ENCODE measurements at regions of chr4 and their contacts with region 1.

Region 1: GRCh38 chr4:526189-526909 is 27.3 kb downstream of the PIGG start:
- DNase-seq: no peak
- H3K4me3 ChIP-seq: no peak overlapping the region
- H3K27ac ChIP-seq: no peak overlapping the region
- H3K4me1 ChIP-seq: no peaks in the 10 kb centered on the region
- H3K27me3 ChIP-seq: no peaks in the 10 kb centered on the region
- CTCF ChIP-seq: no peak

Region 2: DNA sequence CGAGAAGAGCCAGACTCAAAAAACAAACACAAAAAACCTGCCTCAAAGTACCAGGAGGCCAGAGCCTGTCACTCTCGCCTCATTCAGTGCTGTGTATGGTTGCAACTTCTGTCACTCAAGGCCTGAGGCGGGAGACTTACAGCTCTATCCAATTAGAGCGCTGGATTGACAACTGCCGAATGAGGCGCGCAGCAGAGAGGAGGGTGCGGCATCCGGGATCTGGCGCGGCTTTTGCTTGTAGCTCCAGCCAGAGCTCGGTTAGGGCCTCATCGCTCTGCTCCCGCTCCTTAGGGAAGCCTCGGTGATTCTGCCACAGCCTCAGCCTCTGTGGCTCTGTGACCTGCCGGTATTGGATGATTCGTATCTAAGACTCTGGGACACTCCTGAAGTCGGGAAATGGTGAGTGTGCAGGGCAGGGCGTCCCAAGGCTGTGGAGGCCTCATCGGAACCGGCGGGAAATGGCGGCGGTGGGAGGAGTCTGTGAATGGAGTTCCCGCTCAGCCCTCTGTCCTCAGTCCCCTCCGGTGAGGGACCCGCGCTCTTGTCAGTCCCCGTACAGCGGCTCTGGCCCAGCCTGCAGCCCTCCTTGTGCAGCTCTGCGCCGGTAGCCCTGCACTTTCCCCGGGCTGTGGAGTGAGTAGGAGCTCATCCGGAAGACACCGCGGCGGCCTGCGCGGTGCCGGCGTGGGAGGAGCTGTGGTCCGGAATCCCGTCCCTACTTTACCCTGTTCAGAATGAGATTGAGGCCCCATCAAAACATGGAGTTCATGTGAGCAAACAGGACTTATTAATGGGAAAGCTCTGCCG is 401.9 kb before region 1 on chr4 and contains the start of gene ZNF718:
- CTCF ChIA-PET with region 1: no interaction called
- dilution Hi-C with region 1: no loop called
- in situ Hi-C with region 1: no loop called
- intact Hi-C with region 1: no loop called
- DNase-seq: peak; percentile 97
- H3K4me3 ChIP-seq: peak within 1 kb of the TSS; percentile 85 to 99 (median 90)
- H3K27ac ChIP-seq: peak within 1 kb of the TSS; percentile 89
- H3K4me1 ChIP-seq: peaks cover 3% of the 10 kb centered on the region
- H3K27me3 ChIP-seq: no peaks in the 10 kb centered on the region
- CTCF ChIP-seq: no peak
- total RNA-seq, gene ZNF718: 9.2 to 11.8 TPM

Region 3: DNA sequence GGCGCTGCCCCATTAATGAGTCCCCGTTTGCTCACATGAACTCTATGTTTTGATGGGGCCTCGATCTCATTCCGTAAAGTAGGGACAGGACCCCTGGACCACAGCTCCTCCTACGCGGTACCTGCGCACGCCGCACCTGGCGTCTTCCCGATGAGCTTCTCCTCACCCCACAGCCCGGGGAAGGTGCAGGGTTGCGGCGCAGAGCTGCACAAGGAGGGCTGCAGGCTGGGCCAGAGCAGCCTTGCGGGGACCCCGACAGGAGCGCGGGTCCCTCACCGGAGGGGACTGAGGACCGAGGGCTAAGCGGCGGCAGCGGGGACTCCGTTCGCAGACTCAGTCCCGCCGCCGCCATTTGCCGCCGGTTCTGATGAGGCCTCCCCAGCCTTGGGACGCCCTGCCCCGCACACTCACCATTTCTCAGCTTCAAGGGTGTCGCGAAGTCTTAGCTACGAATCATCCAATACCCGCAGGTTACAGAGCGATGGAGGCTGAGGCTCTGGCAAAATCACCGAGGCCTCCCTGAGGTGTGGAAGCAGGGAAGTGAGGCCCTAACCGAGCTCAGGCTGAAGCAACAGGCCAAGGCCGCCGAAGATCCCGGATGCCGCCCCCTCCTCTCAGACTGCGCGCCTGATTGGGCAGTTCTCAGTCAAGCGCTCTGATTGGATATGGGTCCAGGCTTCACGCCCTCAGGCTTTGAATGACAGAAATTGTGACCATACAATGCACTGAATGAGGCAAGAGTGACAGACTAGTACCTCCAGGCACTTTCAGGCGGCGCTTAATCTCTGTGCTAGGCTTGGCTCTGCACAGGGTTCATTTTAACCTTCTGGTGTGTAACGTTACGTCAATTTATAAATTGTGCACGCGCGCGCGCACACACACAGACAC is 52.5 kb before region 1 on chr4:
- CTCF ChIA-PET with region 1: no interaction called
- dilution Hi-C with region 1: no loop called
- in situ Hi-C with region 1: no loop called
- intact Hi-C with region 1: no loop called
- DNase-seq: peak; percentile 99
- H3K4me3 ChIP-seq: peak overlapping the region; percentile 73 to 77 (median 77)
- H3K27ac ChIP-seq: peak overlapping the region; percentile 85
- H3K4me1 ChIP-seq: peaks cover 14% of the 10 kb centered on the region
- H3K27me3 ChIP-seq: no peaks in the 10 kb centered on the region
- CTCF ChIP-seq: no peak

Region 4: GRCh38 chr4:499577-499976 is 26.8 kb before region 1 on chr4:
- CTCF ChIA-PET with region 1: no interaction called
- dilution Hi-C with region 1: no loop called
- in situ Hi-C with region 1: no loop called
- intact Hi-C with region 1: no loop called
- DNase-seq: no peak
- H3K4me3 ChIP-seq: peak overlapping the region; percentile 95 to 98 (median 95)
- H3K27ac ChIP-seq: peak overlapping the region; percentile 81
- H3K4me1 ChIP-seq: peaks cover 15% of the 10 kb centered on the region
- H3K27me3 ChIP-seq: no peaks in the 10 kb centered on the region
- CTCF ChIP-seq: no peak

Region 5: DNA sequence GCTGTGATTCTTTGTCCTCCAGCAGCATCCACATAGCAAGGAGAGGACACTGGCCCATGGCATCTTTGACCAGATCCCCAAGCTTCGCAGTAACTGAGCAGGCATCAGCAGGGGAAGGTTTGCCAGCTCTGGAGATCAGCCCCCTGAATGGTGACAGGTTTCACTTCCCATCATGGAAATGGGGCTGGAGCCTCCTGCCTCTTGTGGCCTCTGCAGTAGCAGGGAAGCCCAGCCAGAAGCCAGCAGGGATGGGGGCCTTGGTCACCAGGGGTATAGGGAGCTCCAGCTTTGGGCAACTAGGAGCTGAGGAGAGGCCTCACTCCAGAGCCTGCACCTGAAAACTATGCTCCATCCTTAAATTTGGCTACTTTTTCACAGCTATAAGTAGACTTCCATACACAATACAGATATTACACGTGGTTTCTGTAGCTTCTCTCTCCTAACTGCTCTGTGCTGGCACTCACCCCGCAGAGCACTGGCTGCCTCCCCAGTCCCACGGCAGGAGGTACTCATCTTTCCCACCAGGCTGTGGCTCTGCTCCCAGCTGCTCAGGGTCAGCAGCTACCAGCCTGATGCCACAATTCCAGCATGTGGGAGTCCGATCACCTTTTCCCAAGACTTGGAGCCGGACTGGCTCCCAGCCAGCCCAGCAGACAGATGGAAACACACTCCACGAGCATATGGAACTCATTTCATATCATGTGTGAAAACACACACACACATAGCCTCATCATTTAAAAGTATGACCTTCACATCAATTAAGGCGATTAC is 47.0 kb after region 1 on chr4:
- CTCF ChIA-PET with region 1: no interaction called
- dilution Hi-C with region 1: loop called (anchors 5 kb)
- in situ Hi-C with region 1: no loop called
- intact Hi-C with region 1: no loop called
- DNase-seq: no peak
- H3K4me3 ChIP-seq: no peak overlapping the region
- H3K27ac ChIP-seq: no peak overlapping the region
- H3K4me1 ChIP-seq: peaks cover 10% of the 10 kb centered on the region
- H3K27me3 ChIP-seq: peaks cover 30% of the 10 kb centered on the region
- CTCF ChIP-seq: no peak

Measured in mammary epithelial cell (primary cell).